Naive thymus-derived CD4-positive, alpha-beta T cell (primary cell): ENCODE measurements at regions of chr7 and their contacts with region 1.

Region 1: DNA sequence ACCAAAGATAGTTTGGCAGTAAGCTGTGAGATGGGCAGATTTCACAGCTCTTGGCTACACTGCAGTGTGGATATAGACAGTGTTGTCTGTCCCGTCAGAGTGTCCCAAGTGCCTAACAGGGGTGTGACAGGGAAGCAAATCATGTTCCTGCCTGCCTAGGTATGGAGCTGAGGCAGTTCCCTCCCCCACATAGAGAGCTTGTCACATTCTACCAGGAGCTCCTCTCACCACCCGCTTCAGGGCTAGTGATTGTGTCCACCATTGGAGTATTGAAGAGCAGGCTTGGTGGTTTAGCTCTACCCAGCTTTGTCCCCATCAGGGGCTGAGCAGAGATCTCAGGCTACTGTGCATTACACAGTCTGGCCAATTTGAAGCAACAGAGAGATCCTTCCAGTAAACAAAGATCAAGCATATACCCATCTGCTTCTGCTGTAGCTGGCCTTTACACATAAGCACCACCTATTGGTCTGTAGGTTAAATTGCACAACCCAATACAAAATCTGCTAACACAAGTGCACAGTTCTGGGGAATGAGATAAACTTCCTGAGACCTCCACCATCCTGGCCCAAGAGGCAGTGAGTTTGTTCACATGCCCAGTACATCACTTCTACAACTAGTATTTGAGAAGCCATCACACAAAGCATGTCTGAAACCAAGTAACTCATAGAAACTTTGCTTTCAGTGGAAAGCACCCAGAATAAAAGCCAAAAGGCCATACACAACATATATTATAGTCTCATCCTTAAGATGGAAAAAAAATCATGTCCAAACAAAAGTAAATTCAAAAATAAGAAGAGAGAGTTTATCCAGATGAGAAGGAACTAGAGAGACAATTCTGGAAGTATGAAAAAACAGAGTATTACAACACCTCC is 67.3 kb downstream of the GLCCI1 start:
- DNase-seq: peak in 7 of 9 donors; percentile 13 to 51 (median 36)
- ATAC-seq: peak; percentile 96
- H3K4me3 ChIP-seq: no peak overlapping the region
- H3K4me3 Mint-ChIP-seq: no peak overlapping the region
- H3K27ac ChIP-seq: no peak overlapping the region
- H3K27ac Mint-ChIP-seq: peak overlapping the region in 8 of 9 donors; percentile 21 to 83 (median 58)
- H3K4me1 ChIP-seq: peaks cover 5 to 6% of the 10 kb centered on the region in 2 donors
- H3K4me1 Mint-ChIP-seq: peaks cover 9 to 28% (median 19%) of the 10 kb centered on the region in 7 donors
- H3K27me3 ChIP-seq: no peaks in the 10 kb centered on the region
- H3K27me3 Mint-ChIP-seq: no peaks in the 10 kb centered on the region

Region 2: DNA sequence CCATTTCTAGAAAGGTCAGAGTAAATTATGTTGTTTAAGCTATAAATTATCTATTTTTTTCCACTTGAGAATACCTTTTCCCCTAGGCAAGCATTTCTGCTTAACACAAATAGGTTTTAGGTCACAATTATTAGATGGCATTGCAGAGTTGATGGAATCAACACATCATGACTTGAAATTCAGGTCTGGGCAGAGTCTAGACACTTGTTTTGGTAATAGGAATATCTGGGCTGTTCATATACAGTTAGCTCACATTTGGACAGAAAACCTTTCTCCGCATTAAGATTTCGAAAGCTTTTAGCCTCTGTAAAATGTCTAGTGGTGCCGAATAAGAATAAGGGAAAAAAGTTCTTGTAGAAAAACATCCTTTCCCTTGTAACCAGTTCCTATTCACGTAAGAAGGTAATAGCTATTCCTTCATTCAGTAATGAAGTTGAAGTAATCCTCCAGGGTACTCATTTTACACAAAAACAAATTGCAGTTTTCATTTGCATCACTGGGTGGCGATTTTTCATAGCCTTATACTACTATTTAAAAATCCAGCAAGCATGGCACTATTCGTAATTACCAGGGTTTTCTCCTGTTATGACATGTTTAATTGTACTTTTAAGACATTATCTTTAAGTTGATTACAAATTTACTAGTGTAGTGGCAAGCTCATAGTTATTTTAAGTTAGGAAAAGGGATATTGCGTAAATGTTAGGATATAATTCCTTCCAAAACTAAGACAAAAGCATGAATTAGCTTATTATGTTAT is 354.5 kb before region 1 on chr7:
- CTCF ChIA-PET with region 1: interaction called, 26 read pairs
- POLR2A ChIA-PET with region 1: interaction called, 3 read pairs
- intact Hi-C with region 1: loop called (anchors 1 to 2 kb)
- DNase-seq: peak in 7 of 9 donors; percentile 37 to 66 (median 58)
- ATAC-seq: peak; percentile 84
- H3K4me3 ChIP-seq: no peak overlapping the region
- H3K4me3 Mint-ChIP-seq: peak overlapping the region in 5 of 10 donors; percentile 8 to 56 (median 25)
- H3K27ac ChIP-seq: no peak overlapping the region
- H3K27ac Mint-ChIP-seq: peak overlapping the region; percentile 1 to 76 (median 18)
- H3K4me1 ChIP-seq: peaks cover 0 to 15% of the 10 kb centered on the region in 2 donors
- H3K4me1 Mint-ChIP-seq: peaks cover 11 to 48% (median 37%) of the 10 kb centered on the region in 7 donors
- H3K27me3 ChIP-seq: no peaks in the 10 kb centered on the region
- H3K27me3 Mint-ChIP-seq: no peaks in the 10 kb centered on the region

Region 3: GRCh38 chr7:7976677-7977076 is 59.2 kb before region 1 on chr7:
- CTCF ChIA-PET with region 1: no interaction called
- POLR2A ChIA-PET with region 1: no interaction called
- intact Hi-C with region 1: no loop called
- DNase-seq: no peak
- ATAC-seq: peak; percentile 50
- H3K4me3 ChIP-seq: no peak overlapping the region
- H3K4me3 Mint-ChIP-seq: peak overlapping the region in 3 of 10 donors; percentile 7 to 27 (median 24)
- H3K27ac ChIP-seq: no peak overlapping the region
- H3K27ac Mint-ChIP-seq: no peak overlapping the region
- H3K4me1 ChIP-seq: peaks cover 32 to 53% of the 10 kb centered on the region in 2 donors
- H3K4me1 Mint-ChIP-seq: peaks cover 30 to 84% (median 70%) of the 10 kb centered on the region in 7 donors
- H3K27me3 ChIP-seq: no peaks in the 10 kb centered on the region
- H3K27me3 Mint-ChIP-seq: no peaks in the 10 kb centered on the region

Region 4: DNA sequence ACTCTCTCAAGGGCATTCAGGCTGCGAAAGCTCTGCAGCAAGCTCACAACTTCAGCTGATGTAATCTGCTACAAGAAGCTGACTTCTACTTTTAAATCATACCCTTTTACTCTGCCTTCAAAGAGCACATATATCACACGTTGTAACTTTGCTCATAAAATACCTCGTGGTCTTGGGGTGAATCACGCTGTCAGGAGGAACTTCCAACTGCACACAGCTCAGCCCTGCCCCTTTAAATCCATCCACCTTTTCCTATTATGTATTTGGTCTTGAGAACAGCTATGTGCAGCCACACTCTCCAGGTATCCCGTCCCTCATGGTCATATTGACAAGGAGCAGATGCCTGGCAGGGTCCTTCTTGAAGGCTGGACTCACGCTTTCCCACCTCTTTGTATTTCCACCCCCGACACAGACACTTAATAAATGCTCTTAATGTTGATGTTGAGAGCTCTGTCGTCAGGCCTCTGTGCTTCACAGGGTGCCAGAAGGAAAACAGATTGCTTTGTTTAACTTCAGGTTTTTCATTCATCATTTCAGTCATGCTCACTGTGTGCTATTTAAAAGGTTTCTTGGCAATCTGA is 178.5 kb after region 1 on chr7:
- CTCF ChIA-PET with region 1: no interaction called
- POLR2A ChIA-PET with region 1: no interaction called
- intact Hi-C with region 1: no loop called
- DNase-seq: no peak
- ATAC-seq: no peak
- H3K4me3 ChIP-seq: no peak overlapping the region
- H3K4me3 Mint-ChIP-seq: no peak overlapping the region
- H3K27ac ChIP-seq: no peak overlapping the region
- H3K27ac Mint-ChIP-seq: no peak overlapping the region
- H3K4me1 ChIP-seq: no peaks in the 10 kb centered on the region
- H3K4me1 Mint-ChIP-seq: peaks cover 0 to 16% (median 3%) of the 10 kb centered on the region in 7 donors
- H3K27me3 ChIP-seq: no peaks in the 10 kb centered on the region
- H3K27me3 Mint-ChIP-seq: peaks cover 0 to 6% (median 0%) of the 10 kb centered on the region in 5 donors